PC-9 (cell line): ENCODE measurements at regions of chr12 and their contacts with region 1.

Region 1: DNA sequence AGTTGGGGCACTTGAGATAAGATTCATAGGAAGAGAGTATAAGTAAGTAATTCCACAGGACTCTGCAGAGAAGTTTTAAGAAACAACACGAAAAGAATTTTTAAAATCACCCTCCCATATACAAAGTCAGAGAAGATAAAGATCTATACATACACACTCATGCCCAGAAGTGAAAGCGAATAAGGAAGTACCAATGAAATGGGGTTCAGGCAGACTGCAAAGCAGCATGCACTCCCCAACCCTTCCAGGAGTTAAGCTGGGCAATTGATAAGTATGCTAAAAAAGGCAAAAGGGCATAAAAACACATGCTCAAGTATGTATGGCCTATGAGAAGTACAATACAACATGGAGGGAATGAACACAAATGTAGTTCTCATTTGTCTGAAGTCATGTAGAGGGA is 246.2 kb upstream of the GRIP1 start:
- DNase-seq: no peak
- H3K4me3 ChIP-seq: no peak overlapping the region
- H3K27ac ChIP-seq: no peak overlapping the region
- H3K4me1 ChIP-seq: no peaks in the 10 kb centered on the region
- H3K27me3 ChIP-seq: no peaks in the 10 kb centered on the region
- CTCF ChIP-seq: no peak

Region 2: DNA sequence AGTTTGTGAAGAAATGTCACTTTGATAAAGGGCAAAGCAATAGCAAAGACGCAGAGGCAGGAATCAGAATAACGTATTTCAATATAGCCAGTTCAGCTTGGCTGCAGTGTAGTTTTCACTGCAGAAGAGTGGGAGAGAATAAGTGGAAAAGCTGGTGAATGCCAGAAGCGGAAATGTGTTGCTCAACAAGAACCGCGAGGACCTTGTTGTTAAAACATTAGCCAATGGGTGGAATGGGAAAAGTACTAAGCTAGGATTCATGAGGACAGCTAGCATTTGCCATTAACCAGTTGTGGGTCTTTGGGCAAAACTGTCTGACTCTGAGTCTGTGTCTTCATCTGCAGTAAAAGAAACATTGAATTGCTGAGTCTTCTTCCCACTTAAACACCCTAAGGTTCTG is 46.7 kb after region 1 on chr12:
- CTCF ChIA-PET with region 1: no interaction called
- POLR2A ChIA-PET with region 1: interaction called, 10 read pairs
- intact Hi-C with region 1: no loop called
- DNase-seq: no peak
- H3K4me3 ChIP-seq: no peak overlapping the region
- H3K27ac ChIP-seq: no peak overlapping the region
- H3K4me1 ChIP-seq: no peaks in the 10 kb centered on the region
- H3K27me3 ChIP-seq: no peaks in the 10 kb centered on the region
- CTCF ChIP-seq: no peak